CD8-positive, alpha-beta T cell (primary cell): ENCODE measurements at regions of chr5 and their contacts with region 1.

Region 1: GRCh38 chr5:72194846-72195245 is 87.6 kb downstream of the MAP1B start:
- DNase-seq: peak in 6 of 9 experiments; percentile 7 to 78 (median 34)
- ATAC-seq: peak; percentile 51
- H3K4me3 ChIP-seq: no peak overlapping the region
- H3K4me3 Mint-ChIP-seq: no peak overlapping the region
- H3K27ac ChIP-seq: no peak overlapping the region
- H3K27ac Mint-ChIP-seq: no peak overlapping the region
- H3K4me1 ChIP-seq: no peaks in the 10 kb centered on the region
- H3K4me1 Mint-ChIP-seq: peaks cover 10% of the 10 kb centered on the region
- H3K27me3 ChIP-seq: peaks cover 0 to 15% of the 10 kb centered on the region in 2 experiments
- H3K27me3 Mint-ChIP-seq: peaks cover 33% of the 10 kb centered on the region
- CTCF ChIP-seq: no peak

Region 2: DNA sequence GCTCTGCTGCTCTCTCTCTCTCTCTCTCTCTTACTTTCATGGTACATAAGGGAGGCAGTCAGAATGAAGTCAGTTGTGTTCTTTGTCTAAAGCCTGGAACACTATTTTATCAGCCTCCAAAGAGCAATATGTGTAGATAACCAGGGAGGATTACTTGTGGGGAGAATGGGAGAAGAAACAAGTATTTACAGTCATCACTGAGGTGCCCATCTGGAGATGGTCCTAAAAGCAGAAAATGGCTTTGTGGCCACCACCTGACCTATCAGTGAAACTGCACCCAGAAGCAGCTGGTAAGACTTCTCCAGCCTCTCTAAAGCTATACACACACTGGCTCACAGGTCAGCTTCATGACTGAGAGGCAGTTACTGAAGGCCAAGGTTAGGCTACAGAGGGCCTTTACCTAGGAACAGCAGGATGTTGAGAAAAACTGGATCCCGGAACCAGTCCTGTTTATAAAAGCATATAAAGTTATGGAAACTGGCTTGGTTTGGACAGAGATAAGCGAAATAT is 50.1 kb after region 1 on chr5:
- CTCF ChIA-PET with region 1: no interaction called
- POLR2A ChIA-PET with region 1: no interaction called
- intact Hi-C with region 1: loop called in 1 of 2 experiments (anchors 10 kb)
- DNase-seq: peak in 2 of 9 experiments; percentile 25 to 30
- ATAC-seq: no peak
- H3K4me3 ChIP-seq: no peak overlapping the region
- H3K4me3 Mint-ChIP-seq: no peak overlapping the region
- H3K27ac ChIP-seq: no peak overlapping the region
- H3K27ac Mint-ChIP-seq: no peak overlapping the region
- H3K4me1 ChIP-seq: no peaks in the 10 kb centered on the region
- H3K4me1 Mint-ChIP-seq: peaks cover 21% of the 10 kb centered on the region
- H3K27me3 ChIP-seq: no peaks in the 10 kb centered on the region
- H3K27me3 Mint-ChIP-seq: no peaks in the 10 kb centered on the region
- CTCF ChIP-seq: no peak

Region 3: GRCh38 chr5:72848474-72849428 is 653.9 kb after region 1 on chr5:
- CTCF ChIA-PET with region 1: no interaction called
- POLR2A ChIA-PET with region 1: no interaction called
- intact Hi-C with region 1: no loop called
- DNase-seq: peak; percentile 10 to 61 (median 40)
- ATAC-seq: peak; percentile 46
- H3K4me3 ChIP-seq: peak overlapping the region; percentile 84 to 89
- H3K4me3 Mint-ChIP-seq: peak overlapping the region; percentile 99
- H3K27ac ChIP-seq: peak overlapping the region; percentile 79 to 81
- H3K27ac Mint-ChIP-seq: peak overlapping the region; percentile 98
- H3K4me1 ChIP-seq: peaks cover 35% of the 10 kb centered on the region
- H3K4me1 Mint-ChIP-seq: peaks cover 67% of the 10 kb centered on the region
- H3K27me3 ChIP-seq: no peaks in the 10 kb centered on the region
- H3K27me3 Mint-ChIP-seq: no peaks in the 10 kb centered on the region
- CTCF ChIP-seq: no peak